ENCODE measurements at regions of chr12 and their contacts with region 1.

Region 1: GRCh38 chr12:128783129-128783574 is 40.6 kb downstream of the SLC15A4 start:
- DNase-seq: peak in 2 of 5 donors; percentile 9 to 18
- H3K4me3 ChIP-seq: no peak overlapping the region
- H3K4me3 Mint-ChIP-seq: peak overlapping the region; percentile 52 to 84 (median 72)
- H3K27ac ChIP-seq: no peak overlapping the region
- H3K27ac Mint-ChIP-seq: peak overlapping the region in 5 of 7 donors; percentile 36 to 85 (median 65)
- H3K4me1 ChIP-seq: no peaks in the 10 kb centered on the region
- H3K4me1 Mint-ChIP-seq: peaks cover 7 to 16% (median 10%) of the 10 kb centered on the region in 4 donors
- H3K27me3 ChIP-seq: peaks cover 3% of the 10 kb centered on the region
- H3K27me3 Mint-ChIP-seq: peaks cover 0 to 2% of the 10 kb centered on the region in 2 donors

Region 2: DNA sequence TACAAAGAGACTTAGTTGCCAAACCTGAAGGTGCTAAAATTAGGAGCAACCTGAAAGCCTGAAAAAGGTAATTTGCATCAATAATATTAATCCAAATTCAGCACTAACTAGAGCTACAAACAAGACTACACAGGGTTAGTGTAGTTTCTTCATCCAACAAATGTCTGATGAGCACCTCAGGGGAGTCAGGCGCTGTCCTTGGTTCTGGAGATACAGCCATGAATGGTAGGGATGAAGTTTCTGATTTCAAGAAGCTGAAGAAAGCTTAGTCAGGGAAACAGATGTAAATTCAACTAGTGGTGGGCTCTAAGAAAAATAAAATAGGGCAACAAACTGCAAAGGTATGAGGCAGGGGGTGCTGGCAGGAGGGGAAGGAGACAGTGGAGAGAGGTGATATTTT is 336.4 kb after region 1 on chr12:
- CTCF ChIA-PET with region 1: interaction called, 10 read pairs
- POLR2A ChIA-PET with region 1: no interaction called
- intact Hi-C with region 1: no loop called
- DNase-seq: no peak
- H3K4me3 ChIP-seq: no peak overlapping the region
- H3K4me3 Mint-ChIP-seq: no peak overlapping the region
- H3K27ac ChIP-seq: no peak overlapping the region
- H3K27ac Mint-ChIP-seq: no peak overlapping the region
- H3K4me1 ChIP-seq: no peaks in the 10 kb centered on the region
- H3K4me1 Mint-ChIP-seq: no peaks in the 10 kb centered on the region
- H3K27me3 ChIP-seq: no peaks in the 10 kb centered on the region
- H3K27me3 Mint-ChIP-seq: no peaks in the 10 kb centered on the region

Region 3: DNA sequence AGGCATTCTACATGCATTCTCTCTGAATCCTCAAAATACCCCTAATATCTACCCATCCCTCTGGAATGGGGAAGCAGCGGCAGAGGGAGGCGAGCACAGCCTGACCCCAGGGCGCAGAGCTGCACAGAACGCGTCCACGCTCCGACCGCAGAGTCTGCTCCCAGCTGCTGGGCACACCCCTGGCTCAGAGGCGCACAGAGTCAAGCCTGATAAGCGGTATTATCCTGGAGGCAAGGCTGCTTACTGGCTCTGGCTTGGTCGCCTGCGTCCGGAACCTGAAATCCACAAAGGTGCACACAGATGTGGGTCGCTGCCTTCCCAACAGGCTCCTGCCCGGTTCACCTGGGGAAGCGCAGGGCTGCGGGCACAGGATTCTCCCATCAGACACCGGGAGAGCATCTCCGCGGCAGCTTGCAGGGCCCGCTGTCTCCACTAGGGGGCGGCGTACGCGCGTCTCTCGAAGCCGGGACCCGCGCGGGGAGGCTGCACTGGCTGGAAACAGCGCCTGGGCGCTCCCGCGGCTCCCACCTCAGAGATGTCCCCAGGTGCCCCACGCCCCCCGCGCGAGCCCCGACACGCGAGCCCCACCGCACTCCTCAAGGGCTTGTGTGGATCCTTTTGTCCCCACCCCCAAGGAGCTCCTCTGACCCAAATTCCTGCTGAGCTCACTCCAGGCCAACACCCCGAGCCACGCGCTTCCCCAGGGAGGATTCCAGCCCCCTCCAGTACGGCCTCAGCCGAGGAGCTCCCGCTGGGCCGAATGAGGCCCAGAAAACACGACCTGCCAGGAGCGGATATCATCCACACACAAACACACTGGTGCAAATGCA is 1259.0 kb after region 1 on chr12:
- CTCF ChIA-PET with region 1: no interaction called
- POLR2A ChIA-PET with region 1: no interaction called
- intact Hi-C with region 1: no loop called
- DNase-seq: no peak
- H3K4me3 ChIP-seq: no peak overlapping the region
- H3K4me3 Mint-ChIP-seq: no peak overlapping the region
- H3K27ac ChIP-seq: no peak overlapping the region
- H3K27ac Mint-ChIP-seq: no peak overlapping the region
- H3K4me1 ChIP-seq: no peaks in the 10 kb centered on the region
- H3K4me1 Mint-ChIP-seq: peaks cover 0 to 7% (median 0%) of the 10 kb centered on the region in 4 donors
- H3K27me3 ChIP-seq: no peaks in the 10 kb centered on the region
- H3K27me3 Mint-ChIP-seq: peaks cover 17 to 18% of the 10 kb centered on the region in 2 donors